HCT116 (cell line): ENCODE measurements at regions of chr19 and their contacts with region 1.

Region 1: GRCh38 chr19:33224694-33225457 is 774 bp downstream of the SLC7A10 start:
- DNase-seq: no peak
- ATAC-seq: no peak
- H3K4me3 ChIP-seq: no peak overlapping the region
- H3K27ac ChIP-seq: no peak overlapping the region
- H3K4me1 ChIP-seq: peaks cover 0 to 12% of the 10 kb centered on the region in 2 experiments; a peak in 2 of 4 replicates
- H3K27me3 ChIP-seq: no peaks in the 10 kb centered on the region
- CTCF ChIP-seq: no peak
- POLR2A ChIP-seq: no peak
- RAD21 ChIP-seq: no peak

Region 2: GRCh38 chr19:33235269-33235995 is 10.6 kb after region 1 on chr19:
- CTCF ChIA-PET with region 1: interaction called, 12 read pairs
- POLR2A ChIA-PET with region 1: no interaction called
- RAD21 ChIA-PET with region 1: no interaction called
- intact Hi-C with region 1: no loop called
- DNase-seq: peak; percentile 57
- ATAC-seq: peak; percentile 88
- H3K4me3 ChIP-seq: no peak overlapping the region
- H3K27ac ChIP-seq: no peak overlapping the region
- H3K4me1 ChIP-seq: peaks cover 0 to 3% of the 10 kb centered on the region in 2 experiments; a peak in 1 of 4 replicates
- H3K27me3 ChIP-seq: no peaks in the 10 kb centered on the region
- CTCF ChIP-seq: peak; percentile 79 to 93 (median 92)
- POLR2A ChIP-seq: no peak
- RAD21 ChIP-seq: peak; percentile 77